Right cardiac atrium (tissue), 5 donors: ENCODE measurements at regions of chr11 and their contacts with region 1.

Region 1: DNA sequence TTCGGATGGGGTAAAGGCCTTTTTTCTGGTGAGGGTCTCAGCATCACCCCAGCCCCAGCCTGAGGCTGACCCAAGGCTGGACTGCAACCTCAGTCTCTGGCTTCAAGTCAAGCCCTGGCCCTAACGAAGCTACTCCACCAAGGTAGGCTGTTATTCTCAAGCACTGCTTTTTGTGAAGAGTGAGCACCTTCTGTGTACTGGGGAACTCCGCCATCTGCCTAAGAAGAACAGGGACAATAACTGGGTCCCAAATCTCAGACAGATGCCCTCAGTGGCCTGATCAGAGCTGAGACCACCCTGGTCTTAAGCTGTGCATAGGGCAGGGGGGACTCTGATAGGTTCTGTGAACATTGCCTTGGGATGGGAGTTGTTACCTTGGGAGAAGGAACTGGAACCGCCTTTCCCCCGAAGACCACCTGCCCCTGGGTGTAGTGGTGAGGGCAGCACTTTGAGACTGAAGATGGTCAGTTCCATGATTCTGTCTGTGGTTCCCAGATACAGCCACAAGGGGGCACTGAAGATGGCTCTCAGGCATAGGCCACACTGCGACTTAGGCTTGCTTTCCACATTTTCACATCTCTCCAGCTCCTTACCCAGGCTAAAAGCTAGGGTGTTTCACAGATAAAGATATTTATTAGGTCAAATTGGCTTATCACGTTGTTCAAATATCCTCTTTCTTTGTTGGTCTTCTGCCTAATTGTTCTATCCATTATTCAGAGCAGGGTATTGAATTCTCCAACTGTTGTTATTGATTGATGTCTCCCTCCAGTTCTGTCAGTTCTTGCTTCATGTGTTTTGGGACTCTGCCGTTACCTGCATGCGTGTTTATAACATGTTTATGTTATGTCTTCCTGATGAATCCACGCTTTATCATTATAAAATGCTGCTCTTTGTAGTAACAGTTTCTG is 11.8 kb upstream of the UVRAG start:
- DNase-seq: peak; percentile 69 to 83 (median 72)
- ATAC-seq: peak; percentile 82 to 86
- H3K4me3 ChIP-seq: no peak overlapping the region
- H3K27ac ChIP-seq: no peak overlapping the region
- H3K4me1 ChIP-seq: no peaks in the 10 kb centered on the region
- H3K27me3 ChIP-seq: no peaks in the 10 kb centered on the region

Region 2: DNA sequence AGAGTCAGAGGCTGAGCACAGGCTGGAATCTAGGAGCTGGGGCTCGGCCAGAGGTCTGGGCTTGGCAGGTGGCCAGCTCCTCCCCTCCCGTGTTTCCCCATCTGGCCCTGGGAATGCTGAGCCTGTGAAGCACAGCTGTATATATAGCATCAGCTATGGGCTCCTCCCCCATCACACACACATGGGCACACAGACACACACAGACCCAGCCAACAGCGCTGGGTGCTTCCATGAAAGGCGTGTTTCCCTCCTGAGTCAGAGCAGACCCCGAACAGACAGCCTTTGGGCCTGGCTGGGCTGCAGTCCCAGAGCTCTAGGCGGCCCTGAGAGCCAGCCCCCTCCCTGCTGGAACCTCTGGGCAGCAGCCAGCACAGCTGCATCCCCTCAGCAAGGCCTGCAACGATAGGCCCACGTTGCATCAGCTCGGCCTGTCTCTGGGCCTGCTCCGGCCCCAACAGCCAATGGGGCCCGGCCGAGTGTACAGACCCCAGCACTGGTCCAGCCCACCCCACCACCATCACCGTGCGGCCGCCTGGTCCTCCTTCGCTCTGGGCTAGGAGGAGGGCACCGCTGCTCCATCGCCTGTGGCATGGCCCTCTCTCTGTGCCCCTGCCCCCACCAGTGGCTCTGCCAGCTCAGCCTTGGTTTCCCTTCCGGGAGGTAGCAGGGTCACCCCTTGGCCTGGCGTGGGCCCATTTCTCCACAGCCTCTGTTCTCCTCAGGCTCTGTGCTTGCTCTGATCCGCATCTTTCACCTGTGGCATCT is 248.7 kb before region 1 on chr11:
- intact Hi-C with region 1: no loop called
- DNase-seq: peak; percentile 97 to 98 (median 98)
- ATAC-seq: peak; percentile 92
- H3K4me3 ChIP-seq: no peak overlapping the region
- H3K27ac ChIP-seq: peak overlapping the region; percentile 53
- H3K4me1 ChIP-seq: peaks cover 14% of the 10 kb centered on the region
- H3K27me3 ChIP-seq: no peaks in the 10 kb centered on the region

Region 3: GRCh38 chr11:75867775-75868374 is 64.7 kb after region 1 on chr11:
- intact Hi-C with region 1: loop called (anchors 2 to 5 kb)
- DNase-seq: no peak
- ATAC-seq: peak; percentile 71 to 77
- H3K4me3 ChIP-seq: no peak overlapping the region
- H3K27ac ChIP-seq: no peak overlapping the region
- H3K4me1 ChIP-seq: no peaks in the 10 kb centered on the region
- H3K27me3 ChIP-seq: no peaks in the 10 kb centered on the region

Region 4: DNA sequence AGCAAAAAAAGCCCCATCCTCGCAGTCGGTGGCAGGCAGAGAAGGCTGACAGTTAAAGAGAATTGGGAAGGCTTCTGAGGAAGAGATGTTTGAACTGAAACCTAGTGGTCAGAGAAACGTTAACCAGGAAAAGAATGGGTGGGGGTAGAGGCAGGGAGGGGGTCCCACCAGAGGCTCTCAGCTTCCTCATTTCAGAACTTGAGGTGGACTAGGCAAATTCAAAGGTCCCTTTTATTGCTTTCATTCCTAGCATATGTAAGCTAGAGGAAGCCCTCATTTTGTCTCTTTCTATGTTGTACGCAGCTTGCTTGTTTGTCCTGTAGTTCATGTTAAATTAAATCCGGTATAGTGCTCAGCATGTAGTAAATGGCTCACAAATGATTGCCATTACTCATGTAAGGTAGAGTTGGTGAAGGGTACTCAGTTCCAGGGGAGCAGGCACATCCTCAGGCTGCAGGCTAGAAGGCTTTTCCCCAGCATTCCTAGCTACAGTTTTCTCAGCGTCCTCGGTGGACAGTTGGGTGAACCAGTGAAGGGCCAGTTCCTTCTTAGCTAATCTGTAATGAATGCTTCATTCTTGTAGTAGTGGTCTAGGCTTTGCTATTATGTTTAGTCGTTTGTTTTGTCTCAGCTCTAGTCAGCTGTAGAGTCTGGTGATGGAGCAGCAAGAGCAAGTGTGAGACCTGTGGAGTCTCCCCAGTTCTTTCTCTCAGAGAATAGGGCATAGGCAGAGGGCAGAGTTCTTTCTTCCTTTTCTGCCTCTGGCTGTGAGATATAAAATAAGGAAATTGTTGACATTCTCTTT is 70.5 kb after region 1 on chr11:
- intact Hi-C with region 1: loop called (anchors 2 to 5 kb)
- DNase-seq: no peak
- ATAC-seq: no peak
- H3K4me3 ChIP-seq: no peak overlapping the region
- H3K27ac ChIP-seq: no peak overlapping the region
- H3K4me1 ChIP-seq: peaks cover 1% of the 10 kb centered on the region
- H3K27me3 ChIP-seq: no peaks in the 10 kb centered on the region

Region 5: GRCh38 chr11:76152086-76152681 is 349.0 kb after region 1 on chr11:
- intact Hi-C with region 1: loop called in 1 of 4 experiments (anchors 10 kb)
- DNase-seq: peak; percentile 91 to 97 (median 95)
- ATAC-seq: peak; percentile 85 to 86
- H3K4me3 ChIP-seq: peak overlapping the region; percentile 39
- H3K27ac ChIP-seq: no peak overlapping the region
- H3K4me1 ChIP-seq: peaks cover 3% of the 10 kb centered on the region
- H3K27me3 ChIP-seq: no peaks in the 10 kb centered on the region